Right lobe of liver (tissue), 6 donors: ENCODE measurements at regions of chr10 and their contacts with region 1.

Region 1: DNA sequence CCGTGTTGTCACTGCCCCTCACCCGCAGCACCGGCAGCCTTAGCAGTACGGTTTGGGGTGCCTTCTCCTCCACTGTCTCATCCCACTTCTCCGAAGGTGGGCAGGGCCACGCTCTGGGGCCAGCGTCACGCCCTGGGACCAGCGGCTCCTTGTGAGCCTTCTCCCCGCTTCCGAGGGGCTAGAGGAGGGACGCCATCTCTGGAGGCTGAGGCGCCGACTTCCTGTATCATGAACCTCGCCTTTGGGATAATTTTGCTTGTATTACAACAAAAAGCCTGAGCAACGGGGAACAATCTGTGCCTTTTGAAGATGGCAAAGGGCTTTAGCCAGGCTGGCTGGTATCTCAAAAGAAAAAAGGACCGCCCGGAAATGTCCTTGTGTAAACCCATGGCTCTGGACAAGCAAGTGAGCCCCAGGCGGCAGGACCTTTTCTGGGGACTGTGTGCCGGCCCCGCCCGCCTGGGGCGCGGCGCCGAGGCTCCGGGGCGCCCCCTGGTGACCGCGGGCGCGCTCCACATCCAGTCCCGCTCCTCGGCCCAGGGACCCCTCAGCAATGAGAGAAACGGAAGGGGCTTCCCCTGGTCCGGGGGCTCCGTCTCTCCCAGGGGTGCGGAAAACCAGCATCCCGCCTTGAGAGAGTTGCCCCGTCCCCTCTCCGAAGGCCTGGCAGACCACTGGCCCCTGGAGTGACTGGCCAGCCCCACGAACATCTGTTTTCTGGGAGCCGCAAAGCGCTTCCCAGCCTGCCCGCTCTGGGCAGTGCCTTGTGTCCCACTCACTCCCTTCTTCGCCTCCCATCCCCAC is 3.8 kb downstream of the DEPP1 start:
- DNase-seq: peak in 2 of 3 donors; percentile 76 to 83
- ATAC-seq: peak; percentile 39 to 67 (median 62)
- H3K4me3 ChIP-seq: peak overlapping the region; percentile 9 to 35 (median 16)
- H3K27ac ChIP-seq: peak overlapping the region; percentile 59 to 93 (median 69)
- H3K4me1 ChIP-seq: peaks cover 0 to 41% (median 18%) of the 10 kb centered on the region in 4 donors
- H3K27me3 ChIP-seq: no peaks in the 10 kb centered on the region
- CTCF ChIP-seq: peak; percentile 95 to 99 (median 98)
- POLR2A ChIP-seq: no peak

Region 2: GRCh38 chr10:44932517-44933450 is 42.0 kb before region 1 on chr10:
- intact Hi-C with region 1: loop called (anchors 5 kb)
- DNase-seq: peak; percentile 90 to 94 (median 93)
- ATAC-seq: peak; percentile 88 to 98 (median 94)
- H3K4me3 ChIP-seq: no peak overlapping the region
- H3K27ac ChIP-seq: no peak overlapping the region
- H3K4me1 ChIP-seq: peaks cover 0 to 29% (median under 1%) of the 10 kb centered on the region in 4 donors
- H3K27me3 ChIP-seq: no peaks in the 10 kb centered on the region
- CTCF ChIP-seq: peak; percentile 98 to 99 (median 98)
- POLR2A ChIP-seq: no peak

Region 3: DNA sequence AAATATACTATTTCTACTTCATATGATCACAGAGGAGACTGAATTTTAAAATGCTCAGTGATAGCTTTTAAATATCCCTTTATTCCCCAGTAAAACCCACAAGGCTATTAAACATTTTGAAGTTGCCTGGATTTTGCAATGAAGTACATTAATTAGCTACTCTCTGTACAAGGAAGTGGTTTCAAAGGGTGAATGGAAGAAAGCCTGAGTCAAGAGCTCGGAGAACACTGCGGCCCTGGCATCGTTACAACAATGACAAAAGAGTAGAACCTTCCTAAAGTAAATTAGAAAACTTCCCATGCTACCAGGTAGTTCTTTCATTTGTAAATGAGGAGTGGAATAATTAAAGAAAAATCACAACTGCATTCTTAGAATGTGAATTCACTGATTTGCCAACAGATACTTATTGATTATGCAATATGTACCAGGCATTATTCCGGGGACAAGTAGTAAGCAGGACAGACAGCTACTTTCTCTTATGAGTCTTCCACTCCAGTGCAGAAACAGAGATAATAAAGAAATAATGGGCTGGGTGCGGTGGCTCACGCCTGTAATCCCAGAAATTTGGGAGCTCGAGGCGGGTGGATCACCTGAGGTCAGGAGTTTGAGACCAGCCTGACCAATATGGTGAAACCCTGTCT is 88.9 kb after region 1 on chr10:
- intact Hi-C with region 1: no loop called
- DNase-seq: no peak
- ATAC-seq: no peak
- H3K4me3 ChIP-seq: no peak overlapping the region
- H3K27ac ChIP-seq: no peak overlapping the region
- H3K4me1 ChIP-seq: no peaks in the 10 kb centered on the region
- H3K27me3 ChIP-seq: no peaks in the 10 kb centered on the region
- CTCF ChIP-seq: no peak
- POLR2A ChIP-seq: no peak